ENCODE measurements at regions of chr5 and their contacts with region 1.

Region 1: DNA sequence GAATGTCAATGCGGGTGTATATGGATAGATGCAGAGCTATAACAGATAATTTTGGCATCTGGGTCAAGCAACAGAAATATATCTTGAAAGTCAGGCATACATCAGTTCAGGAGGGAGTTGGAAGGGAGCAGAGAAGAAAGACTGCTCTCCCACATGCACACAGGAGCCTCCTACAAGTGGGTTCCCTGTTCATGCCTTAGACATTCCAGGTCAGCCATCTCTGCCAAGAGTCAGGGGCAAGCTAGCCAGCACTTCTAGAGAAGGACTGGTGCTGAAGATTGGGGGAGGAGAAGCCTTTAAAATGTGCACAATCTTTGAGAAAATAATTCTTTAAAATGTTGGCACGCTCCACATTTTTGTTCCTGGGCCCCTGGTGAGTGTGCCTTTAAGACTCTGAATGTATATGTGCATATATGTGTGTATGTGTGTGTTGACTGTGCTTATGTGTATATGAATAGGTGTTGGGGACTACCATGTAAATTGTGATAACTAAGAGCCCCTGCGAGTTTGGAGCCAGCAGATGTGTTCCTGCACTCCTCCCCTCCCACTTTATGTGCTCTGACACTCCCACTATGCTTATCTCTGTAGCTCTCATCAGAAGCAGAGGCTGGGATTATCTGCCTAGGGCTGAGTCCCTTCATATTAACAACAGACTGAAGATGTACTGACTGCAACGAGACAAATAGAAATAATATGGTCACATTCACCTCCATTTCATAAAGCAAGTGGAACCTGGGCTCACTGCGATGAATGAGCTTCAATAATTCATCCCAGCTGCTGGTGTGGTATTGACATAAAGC is 21.5 kb upstream of the DELE1 start:
- DNase-seq: no peak
- H3K4me3 ChIP-seq: no peak overlapping the region
- H3K27ac ChIP-seq: no peak overlapping the region
- H3K4me1 ChIP-seq: peaks cover 0 to 4% of the 10 kb centered on the region in 2 donors
- H3K27me3 ChIP-seq: no peaks in the 10 kb centered on the region
- CTCF ChIP-seq: no peak
- POLR2A ChIP-seq: no peak

Region 2: DNA sequence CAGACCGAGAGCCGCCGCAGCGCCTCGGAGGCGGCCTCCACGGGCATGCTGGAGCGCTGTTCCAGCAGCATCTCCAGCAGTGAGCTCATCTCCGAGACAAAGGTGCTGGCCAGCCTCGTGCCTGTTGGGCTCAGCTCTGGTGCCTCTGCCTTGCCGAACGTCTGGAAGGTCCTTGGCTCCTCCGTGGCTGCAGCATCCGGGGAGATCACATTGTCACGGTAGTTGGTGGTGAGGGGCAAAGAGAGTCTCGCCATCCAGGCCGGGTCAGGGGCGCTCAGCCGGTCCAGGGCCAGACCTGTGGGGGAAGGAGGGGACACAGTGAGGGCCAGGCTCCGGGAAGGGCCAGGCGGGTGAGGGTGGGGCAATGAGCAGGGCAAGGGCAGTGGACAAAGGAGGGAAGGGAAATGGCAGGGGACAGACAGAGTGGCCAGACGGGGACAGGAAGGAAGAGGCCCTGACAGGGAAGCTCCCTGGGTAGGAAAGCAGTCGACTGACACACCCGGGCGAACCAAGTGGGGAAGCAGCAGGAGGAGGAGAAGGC is 43.4 kb after region 1 on chr5:
- intact Hi-C with region 1: loop called (anchors 1 kb)
- DNase-seq: no peak
- H3K4me3 ChIP-seq: no peak overlapping the region
- H3K27ac ChIP-seq: peak overlapping the region in 1 of 2 donors; percentile 12
- H3K4me1 ChIP-seq: no peaks in the 10 kb centered on the region
- H3K27me3 ChIP-seq: no peaks in the 10 kb centered on the region
- CTCF ChIP-seq: no peak
- POLR2A ChIP-seq: no peak

Measured in breast epithelium (tissue), 4 donors.